Spleen (tissue), 13 donors: ENCODE measurements at regions of chr2 and their contacts with region 1.

Region 1: DNA sequence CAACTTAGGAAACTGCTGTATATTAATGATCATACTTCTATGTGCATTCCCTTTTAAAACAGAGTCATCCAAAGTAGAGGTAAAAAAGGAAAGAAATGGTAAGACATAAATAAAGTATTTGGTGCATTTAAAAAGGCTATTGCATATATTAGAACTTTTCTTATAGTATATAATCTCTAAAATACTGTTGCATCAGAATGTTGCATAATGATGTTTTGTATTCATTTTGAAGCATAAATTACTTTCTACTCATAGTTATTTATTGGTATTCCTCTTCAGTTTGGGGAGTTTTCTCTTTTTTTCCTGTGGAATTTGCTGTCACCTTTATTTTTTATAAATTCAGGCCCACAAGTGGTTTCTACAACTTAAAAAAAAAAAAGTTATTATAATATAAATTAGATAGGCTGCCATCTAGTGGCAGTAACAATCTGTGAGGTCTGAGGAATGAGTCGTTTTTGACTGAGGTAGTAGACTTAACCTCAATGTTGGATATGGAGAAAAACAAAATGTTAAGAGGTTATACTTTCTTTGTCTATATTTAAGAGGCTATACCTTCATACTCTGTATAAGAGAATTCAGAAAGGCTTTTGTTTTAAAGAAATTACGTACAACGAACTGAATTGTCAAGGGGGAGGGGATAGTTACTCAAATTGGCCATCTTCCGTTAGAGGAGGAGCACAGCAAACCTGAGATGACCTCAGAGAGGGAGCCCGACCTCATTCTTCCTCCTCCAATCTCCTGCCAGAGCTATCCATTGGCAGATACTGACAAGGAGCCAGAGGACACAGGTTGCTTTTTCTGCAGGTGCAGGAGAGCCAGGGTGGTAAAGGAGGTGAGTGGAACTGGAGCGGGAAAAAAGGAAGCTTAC is 23.8 kb downstream of the ANKAR start:
- DNase-seq: no peak
- H3K4me3 ChIP-seq: no peak overlapping the region
- H3K27ac ChIP-seq: peak overlapping the region in 1 of 8 donors; percentile 34
- H3K4me1 ChIP-seq: peaks cover 0 to 12% (median 4%) of the 10 kb centered on the region in 6 donors
- H3K27me3 ChIP-seq: no peaks in the 10 kb centered on the region
- CTCF ChIP-seq: peak in 10 of 11 experiments; percentile 15 to 78 (median 64)
- POLR2A ChIP-seq: no peak

Region 2: GRCh38 chr2:188580727-188581126 is 1117.5 kb before region 1 on chr2:
- intact Hi-C with region 1: no loop called
- DNase-seq: no peak
- H3K4me3 ChIP-seq: no peak overlapping the region
- H3K27ac ChIP-seq: no peak overlapping the region
- H3K4me1 ChIP-seq: no peaks in the 10 kb centered on the region
- H3K27me3 ChIP-seq: no peaks in the 10 kb centered on the region
- CTCF ChIP-seq: no peak
- POLR2A ChIP-seq: no peak

Region 3: DNA sequence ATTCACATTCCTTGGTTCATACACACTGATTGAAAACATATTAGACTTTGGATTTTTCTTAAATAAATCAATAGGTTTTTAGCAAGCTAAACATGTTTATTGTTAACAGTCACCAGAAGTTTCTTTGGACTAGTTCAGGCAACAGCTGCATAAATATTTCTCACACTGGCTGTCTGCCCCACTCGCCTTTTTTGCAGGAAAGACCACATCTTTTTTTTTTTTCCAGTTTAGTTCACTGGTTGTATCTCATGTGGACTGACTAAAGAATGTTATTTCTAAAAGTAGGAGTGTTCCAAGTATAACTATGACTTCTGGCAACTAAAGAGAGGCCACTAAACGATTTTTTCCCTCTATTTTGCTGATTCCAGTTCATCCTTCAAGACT is 148.8 kb before region 1 on chr2:
- intact Hi-C with region 1: no loop called
- DNase-seq: no peak
- H3K4me3 ChIP-seq: no peak overlapping the region
- H3K27ac ChIP-seq: peak overlapping the region in 4 of 8 donors; percentile 3 to 40 (median 24)
- H3K4me1 ChIP-seq: peaks cover 0 to 15% (median 6%) of the 10 kb centered on the region in 6 donors
- H3K27me3 ChIP-seq: no peaks in the 10 kb centered on the region
- CTCF ChIP-seq: no peak
- POLR2A ChIP-seq: no peak

Region 4: GRCh38 chr2:189661148-189661956 is 36.9 kb before region 1 on chr2 and contains the start of gene ASNSD1:
- intact Hi-C with region 1: loop called (anchors 5 kb)
- DNase-seq: peak; percentile 99
- H3K4me3 ChIP-seq: peak within 1 kb of the TSS; percentile 56 to 93 (median 76)
- H3K27ac ChIP-seq: peak within 1 kb of the TSS; percentile 85 to 95 (median 92)
- H3K4me1 ChIP-seq: peaks cover 18 to 77% (median 53%) of the 10 kb centered on the region in 6 donors
- H3K27me3 ChIP-seq: no peaks in the 10 kb centered on the region
- CTCF ChIP-seq: peak; percentile 91 to 100 (median 97)
- POLR2A ChIP-seq: peak; percentile 49 to 75 (median 54)
- total RNA-seq, gene ASNSD1: 28.1 to 50.8 (median 33.9) TPM